ENCODE measurements at regions of chr13 and their contacts with region 1.

Region 1: GRCh38 chr13:105165449-105166125 is 1369.9 kb downstream of the EFNB2 start:
- DNase-seq: no peak
- H3K4me3 ChIP-seq: no peak overlapping the region
- H3K27ac ChIP-seq: no peak overlapping the region
- H3K4me1 ChIP-seq: no peaks in the 10 kb centered on the region
- H3K27me3 ChIP-seq: no peaks in the 10 kb centered on the region
- CTCF ChIP-seq: no peak
- POLR2A ChIP-seq: no peak

Region 2: GRCh38 chr13:103815619-103816018 is 1350.0 kb before region 1 on chr13:
- intact Hi-C with region 1: loop called (anchors 5 kb)
- DNase-seq: no peak
- H3K4me3 ChIP-seq: no peak overlapping the region
- H3K27ac ChIP-seq: no peak overlapping the region
- H3K4me1 ChIP-seq: no peaks in the 10 kb centered on the region
- H3K27me3 ChIP-seq: no peaks in the 10 kb centered on the region
- CTCF ChIP-seq: no peak
- POLR2A ChIP-seq: no peak

Region 3: GRCh38 chr13:105097521-105097920 is 68.1 kb before region 1 on chr13:
- intact Hi-C with region 1: loop called (anchors 2 kb)
- DNase-seq: no peak
- H3K4me3 ChIP-seq: no peak overlapping the region
- H3K27ac ChIP-seq: no peak overlapping the region
- H3K4me1 ChIP-seq: no peaks in the 10 kb centered on the region
- H3K27me3 ChIP-seq: no peaks in the 10 kb centered on the region
- CTCF ChIP-seq: no peak
- POLR2A ChIP-seq: no peak

Region 4: GRCh38 chr13:105147461-105147860 is 18.1 kb before region 1 on chr13:
- intact Hi-C with region 1: no loop called
- DNase-seq: no peak
- H3K4me3 ChIP-seq: no peak overlapping the region
- H3K27ac ChIP-seq: no peak overlapping the region
- H3K4me1 ChIP-seq: no peaks in the 10 kb centered on the region
- H3K27me3 ChIP-seq: no peaks in the 10 kb centered on the region
- CTCF ChIP-seq: no peak
- POLR2A ChIP-seq: no peak

Region 5: GRCh38 chr13:105936816-105937215 is 771.2 kb after region 1 on chr13:
- intact Hi-C with region 1: no loop called
- DNase-seq: no peak
- H3K4me3 ChIP-seq: no peak overlapping the region
- H3K27ac ChIP-seq: no peak overlapping the region
- H3K4me1 ChIP-seq: no peaks in the 10 kb centered on the region
- H3K27me3 ChIP-seq: no peaks in the 10 kb centered on the region
- CTCF ChIP-seq: no peak
- POLR2A ChIP-seq: no peak